RWPE1 (cell line): ENCODE measurements at regions of chr9 and their contacts with region 1.

Region 1: DNA sequence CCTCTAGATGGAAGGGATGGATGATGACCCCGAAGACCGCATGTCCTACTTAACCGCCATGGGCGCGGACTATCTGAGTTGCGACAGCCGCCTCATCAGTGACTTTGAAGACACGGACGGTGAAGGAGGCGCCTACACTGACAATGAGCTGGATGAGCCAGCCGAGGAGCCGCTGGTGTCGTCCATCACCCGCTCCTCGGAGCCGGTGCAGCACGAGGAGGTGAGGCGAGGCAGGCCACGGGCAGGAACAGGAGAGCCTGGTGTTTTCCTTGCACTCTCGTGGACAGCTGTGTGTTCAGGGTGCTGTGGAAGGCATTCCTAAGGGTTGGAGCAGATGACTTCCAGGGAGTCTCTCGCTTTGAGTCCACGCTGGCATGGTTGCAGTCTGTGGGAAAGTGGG is 73.9 kb downstream of the TJP2 start:
- DNase-seq: no peak
- H3K27ac ChIP-seq: no peak overlapping the region
- CTCF ChIP-seq: no peak

Region 2: GRCh38 chr9:69264526-69264925 is 16.5 kb after region 1 on chr9:
- CTCF ChIA-PET with region 1: interaction called, 3 read pairs
- POLR2A ChIA-PET with region 1: interaction called, 13 read pairs
- DNase-seq: no peak
- H3K27ac ChIP-seq: no peak overlapping the region
- CTCF ChIP-seq: no peak

Region 3: DNA sequence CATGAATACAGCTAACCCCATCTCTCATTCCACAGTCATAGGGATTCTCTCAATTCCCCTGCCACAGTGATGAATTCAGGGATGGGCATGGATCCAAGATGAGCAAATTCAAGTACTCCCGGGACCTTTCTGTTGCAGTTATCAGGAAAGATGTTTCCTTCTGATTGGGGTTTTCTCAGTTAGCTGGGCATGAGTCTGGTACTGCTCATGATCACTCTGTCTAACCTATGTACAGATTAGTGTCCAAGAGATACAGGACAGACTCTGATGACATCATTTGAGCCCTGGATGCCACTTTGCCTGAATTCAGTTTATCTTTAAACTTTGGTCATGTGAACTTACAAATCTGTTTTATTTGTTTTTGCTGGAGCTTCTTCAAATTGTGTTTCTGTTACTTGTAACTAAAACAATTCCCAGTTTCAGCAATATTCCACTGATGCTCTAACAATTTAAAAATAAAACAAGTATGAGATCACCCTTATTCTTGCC is 1424.2 kb after region 1 on chr9:
- CTCF ChIA-PET with region 1: no interaction called
- POLR2A ChIA-PET with region 1: no interaction called
- DNase-seq: no peak
- H3K27ac ChIP-seq: no peak overlapping the region
- CTCF ChIP-seq: no peak